ENCODE measurements at regions of chr7 and their contacts with region 1.

Region 1: GRCh38 chr7:100369105-100369504 is 4.2 kb upstream of the PILRA start:
- DNase-seq: peak; percentile 86
- H3K4me3 ChIP-seq: peak overlapping the region; percentile 32
- H3K27ac ChIP-seq: peak overlapping the region; percentile 93
- H3K4me1 ChIP-seq: peaks cover 85% of the 10 kb centered on the region
- CTCF ChIP-seq: no peak

Region 2: DNA sequence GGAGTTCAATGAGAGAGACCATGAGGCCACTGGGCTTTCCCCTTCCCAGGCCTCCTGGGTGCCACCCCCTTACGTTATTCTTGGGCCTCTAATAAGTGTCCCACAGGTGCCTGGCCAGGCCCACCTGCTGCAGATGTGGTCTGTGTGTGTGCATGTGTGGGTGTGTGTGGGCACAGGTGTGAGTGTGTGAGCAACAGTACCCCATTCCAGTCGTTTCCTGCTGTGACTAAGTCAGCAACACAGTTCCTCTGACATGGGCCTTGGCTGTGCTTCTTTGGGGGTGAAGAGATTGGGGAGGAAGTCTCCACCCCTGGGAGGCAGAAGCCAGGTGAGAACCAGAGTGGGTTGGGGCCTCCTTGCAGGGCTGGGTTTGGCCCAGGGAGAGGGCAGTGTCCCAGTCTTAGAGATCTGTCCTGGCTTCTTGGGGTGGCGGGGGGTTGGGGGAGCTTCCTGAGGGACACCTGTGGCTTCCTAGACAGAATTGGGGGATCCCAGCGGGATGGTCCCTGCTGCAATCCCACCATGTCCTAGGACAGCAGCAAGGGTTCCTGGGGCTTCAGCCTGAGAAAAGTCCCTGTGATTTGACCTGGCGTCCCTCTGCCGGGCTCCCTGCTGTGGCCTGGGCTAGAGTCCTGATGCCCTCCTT is 15.3 kb before region 1 on chr7:
- CTCF ChIA-PET with region 1: no interaction called
- POLR2A ChIA-PET with region 1: no interaction called
- intact Hi-C with region 1: no loop called
- DNase-seq: peak; percentile 33
- H3K4me3 ChIP-seq: no peak overlapping the region
- H3K27ac ChIP-seq: no peak overlapping the region
- H3K4me1 ChIP-seq: peaks cover 17% of the 10 kb centered on the region
- CTCF ChIP-seq: no peak

Region 3: DNA sequence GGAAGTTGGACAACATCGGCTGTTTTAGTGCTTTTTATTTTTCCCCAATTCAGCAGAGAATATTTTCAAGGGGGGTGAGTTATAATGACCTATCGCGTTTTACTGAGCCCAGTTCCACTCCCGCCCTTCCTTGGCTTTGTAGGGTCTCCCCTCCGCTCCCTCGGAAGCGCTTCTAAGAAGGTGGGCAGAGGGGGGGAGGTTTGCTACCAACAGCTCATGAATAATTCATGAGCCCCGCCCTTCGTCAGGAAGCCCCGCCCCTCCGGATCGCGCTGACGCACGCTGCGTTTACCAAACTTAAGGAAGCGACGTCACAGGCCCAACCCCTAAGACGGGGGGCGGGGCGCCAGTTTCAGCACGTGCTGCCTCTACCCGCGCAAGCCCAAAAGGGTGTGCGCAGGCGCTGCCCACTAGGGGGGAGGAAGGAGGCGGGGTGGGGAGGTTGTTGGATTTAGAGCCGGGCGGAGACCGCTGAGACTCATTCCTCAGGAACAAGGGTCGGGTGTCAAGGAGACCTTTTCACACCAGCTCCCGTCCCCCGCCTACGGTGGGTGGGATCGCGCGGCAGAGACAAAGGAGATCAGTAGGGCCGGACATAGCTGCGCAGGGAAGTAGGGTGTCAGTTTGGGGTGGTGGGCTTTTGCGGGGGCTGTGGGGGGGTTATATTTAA is 60.0 kb after region 1 on chr7:
- CTCF ChIA-PET with region 1: no interaction called
- POLR2A ChIA-PET with region 1: interaction called, 4 read pairs
- intact Hi-C with region 1: loop called (anchors 1 kb)
- DNase-seq: peak; percentile 100
- H3K4me3 ChIP-seq: peak overlapping the region; percentile 91
- H3K27ac ChIP-seq: peak overlapping the region; percentile 93
- H3K4me1 ChIP-seq: peaks cover 43% of the 10 kb centered on the region
- CTCF ChIP-seq: no peak; the same call in 1 of the 2 replicates

Measured in OCI-LY7 (cell line).